ENCODE measurements at regions of chr11 and their contacts with region 1.

Region 1: DNA sequence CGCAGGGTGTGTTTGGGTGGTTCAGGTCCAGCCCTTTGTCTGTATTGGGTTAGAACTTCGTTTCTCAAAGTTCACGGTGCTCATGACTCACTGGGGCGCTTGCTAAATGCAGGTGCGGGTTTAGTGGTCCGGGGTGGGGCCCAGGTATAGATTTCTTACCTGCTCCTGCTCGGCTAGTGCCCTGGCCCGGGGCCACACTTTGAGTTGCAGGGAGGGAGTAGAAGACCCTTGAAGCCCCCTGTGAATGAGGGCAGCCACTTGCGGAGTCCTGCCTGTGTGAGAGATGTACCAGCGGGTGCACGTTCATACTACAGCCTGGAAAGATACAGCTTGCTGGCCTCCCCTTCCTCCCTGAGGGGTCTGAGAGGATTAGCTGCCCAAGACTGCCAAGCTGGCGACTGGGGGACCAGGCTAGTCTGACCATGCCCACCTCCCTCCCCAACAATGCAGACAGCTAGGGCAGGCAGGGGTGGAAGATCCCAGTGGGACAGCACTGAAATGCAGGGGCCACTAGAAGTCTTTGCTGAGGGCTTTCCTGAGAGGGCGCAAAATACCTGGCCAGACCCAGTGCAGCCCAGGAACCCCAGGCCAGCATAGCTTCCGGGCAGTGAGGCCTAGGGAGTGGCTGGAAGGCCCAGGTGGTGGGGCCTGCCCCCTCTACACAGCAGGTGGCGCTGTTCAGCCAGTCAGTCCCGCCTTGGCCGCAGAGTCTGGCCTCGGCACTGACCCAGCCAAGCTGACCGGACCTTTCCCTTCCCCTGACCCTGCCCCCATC is 5.1 kb upstream of the MYRF start:
- DNase-seq: peak in 2 of 3 donors; percentile 37 to 43
- H3K4me3 ChIP-seq: no peak overlapping the region
- H3K27ac ChIP-seq: no peak overlapping the region
- H3K4me1 ChIP-seq: peaks cover 0 to 4% (median 3%) of the 10 kb centered on the region in 4 experiments
- H3K27me3 ChIP-seq: peaks cover 0 to 12% (median 2%) of the 10 kb centered on the region in 5 experiments

Region 2: DNA sequence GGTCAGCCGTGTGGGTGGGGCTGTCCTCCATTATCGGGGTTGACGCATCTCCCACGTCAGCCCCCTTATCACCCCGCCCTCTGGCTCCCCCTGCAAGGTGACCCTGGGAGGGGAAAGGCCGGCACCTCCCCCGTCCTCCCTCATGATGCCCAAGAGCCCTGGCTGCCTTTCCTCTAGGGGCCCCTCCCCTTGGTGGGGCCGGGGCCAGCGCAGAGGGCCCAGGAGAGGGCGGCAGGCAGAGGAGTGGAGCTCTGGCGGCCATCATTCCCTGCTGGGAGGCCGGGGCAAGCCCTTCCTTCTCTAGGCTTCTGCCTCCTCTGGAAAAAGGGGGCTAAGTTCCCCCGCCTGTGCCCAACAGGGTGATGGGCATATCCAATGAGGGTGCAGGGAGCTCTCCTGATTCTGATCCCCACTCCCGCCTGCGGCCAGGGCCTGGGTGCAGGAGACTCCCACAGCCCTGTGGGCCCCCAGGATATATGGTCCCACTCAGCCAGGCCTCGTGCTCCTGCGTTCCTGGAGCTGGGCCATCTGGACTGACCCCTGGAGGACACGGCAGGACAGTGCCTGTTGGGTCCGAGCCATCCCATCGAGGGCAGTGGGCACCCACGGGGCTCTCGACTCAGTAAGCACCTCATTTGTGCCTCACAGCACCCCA is 17.4 kb after region 1 on chr11:
- CTCF ChIA-PET with region 1: interaction called, 19 read pairs
- POLR2A ChIA-PET with region 1: no interaction called
- DNase-seq: no peak
- H3K4me3 ChIP-seq: no peak overlapping the region
- H3K27ac ChIP-seq: no peak overlapping the region
- H3K4me1 ChIP-seq: peaks cover 0 to 8% (median 0%) of the 10 kb centered on the region in 4 experiments
- H3K27me3 ChIP-seq: peaks cover 0 to 9% (median 2%) of the 10 kb centered on the region in 5 experiments

Measured in common myeloid progenitor, CD34-positive (primary cell).